ENCODE measurements at regions of chr14 and their contacts with region 1.

Region 1: DNA sequence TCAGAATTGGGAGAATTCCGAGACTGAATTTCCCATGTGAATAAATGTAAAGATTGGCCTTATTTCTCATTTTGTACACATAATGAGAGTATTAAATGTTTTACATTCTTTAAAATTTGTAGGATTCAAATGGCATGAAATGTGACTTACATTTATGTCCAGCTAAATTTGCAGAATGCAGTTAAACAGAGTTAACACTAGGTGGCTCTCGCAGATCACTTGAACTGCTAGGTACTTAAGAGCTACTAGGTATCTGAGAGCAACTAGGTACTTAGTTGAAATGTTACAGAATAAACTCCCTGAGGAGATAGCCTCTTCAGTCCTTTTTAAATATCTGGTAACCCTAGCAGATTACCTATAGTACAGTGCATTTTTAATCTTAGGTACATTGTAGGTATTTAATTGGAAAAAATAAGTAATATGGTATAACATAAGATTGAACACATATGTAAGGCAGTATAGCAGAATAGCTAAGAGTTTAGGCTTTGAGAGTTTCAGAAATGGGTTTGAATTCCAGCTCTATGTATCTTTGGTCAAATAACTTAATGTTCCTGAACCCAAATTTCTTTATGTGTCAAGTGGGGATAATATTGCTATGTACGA is 73.8 kb downstream of the KIAA0586 start:
- DNase-seq: peak; percentile 72
- H3K4me3 ChIP-seq: no peak overlapping the region
- H3K27ac ChIP-seq: no peak overlapping the region
- H3K27me3 ChIP-seq: no peaks in the 10 kb centered on the region
- CTCF ChIP-seq: peak; percentile 91

Region 2: DNA sequence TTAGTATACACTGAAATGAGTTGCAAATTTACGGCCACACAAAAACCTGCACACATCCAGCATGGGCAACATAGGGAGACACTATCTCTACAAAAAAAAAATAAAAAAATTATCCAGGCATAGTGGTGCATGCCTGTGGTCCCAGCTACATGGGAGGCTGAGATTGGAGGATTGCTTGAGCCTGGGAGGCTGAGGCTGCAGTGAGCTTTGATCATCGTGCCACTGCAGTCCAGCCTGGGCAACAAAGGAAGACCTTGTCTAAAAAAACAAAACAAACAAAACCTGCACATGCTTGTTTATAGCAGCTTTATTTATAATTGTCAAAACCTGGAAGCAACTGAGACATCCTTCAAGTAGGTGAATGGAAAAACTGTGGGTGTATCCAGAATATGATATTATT is 110.5 kb before region 1 on chr14:
- CTCF ChIA-PET with region 1: no interaction called
- POLR2A ChIA-PET with region 1: no interaction called
- DNase-seq: no peak
- H3K4me3 ChIP-seq: no peak overlapping the region
- H3K27ac ChIP-seq: no peak overlapping the region
- H3K27me3 ChIP-seq: peaks cover 3% of the 10 kb centered on the region
- CTCF ChIP-seq: no peak

Region 3: GRCh38 chr14:58455587-58456228 is 45.6 kb before region 1 on chr14:
- CTCF ChIA-PET with region 1: no interaction called
- POLR2A ChIA-PET with region 1: no interaction called
- DNase-seq: no peak
- H3K4me3 ChIP-seq: no peak overlapping the region
- H3K27ac ChIP-seq: no peak overlapping the region
- H3K27me3 ChIP-seq: no peaks in the 10 kb centered on the region
- CTCF ChIP-seq: no peak

Region 4: DNA sequence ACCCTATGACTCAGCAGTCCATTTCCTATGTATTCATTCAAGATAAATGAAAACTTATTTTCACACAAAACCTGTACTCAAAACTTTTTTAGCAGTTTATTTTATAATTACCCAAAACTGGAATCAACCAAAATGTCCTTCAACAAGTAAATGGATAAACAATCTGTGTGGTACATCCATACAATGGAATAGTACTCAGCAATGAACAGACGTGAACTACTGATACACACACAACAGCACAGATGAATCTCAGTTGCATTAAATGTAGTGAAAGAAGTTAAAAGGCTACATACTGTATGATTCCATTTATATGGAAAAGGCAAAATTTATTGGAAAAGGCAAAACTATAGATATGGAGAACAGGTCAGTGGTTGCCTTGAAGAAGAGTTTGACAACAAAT is 16.3 kb after region 1 on chr14:
- CTCF ChIA-PET with region 1: interaction called, 10 read pairs
- POLR2A ChIA-PET with region 1: no interaction called
- DNase-seq: no peak
- H3K4me3 ChIP-seq: no peak overlapping the region
- H3K27ac ChIP-seq: no peak overlapping the region
- H3K27me3 ChIP-seq: no peaks in the 10 kb centered on the region
- CTCF ChIP-seq: no peak

Region 5: GRCh38 chr14:58629281-58629680 is 128.0 kb after region 1 on chr14:
- CTCF ChIA-PET with region 1: interaction called, 81 read pairs
- POLR2A ChIA-PET with region 1: no interaction called
- DNase-seq: no peak
- H3K4me3 ChIP-seq: no peak overlapping the region
- H3K27ac ChIP-seq: no peak overlapping the region
- H3K27me3 ChIP-seq: no peaks in the 10 kb centered on the region
- CTCF ChIP-seq: no peak

Region 6: GRCh38 chr14:58637391-58638230 is 136.3 kb after region 1 on chr14 and contains the start of gene DACT1:
- CTCF ChIA-PET with region 1: interaction called, 81 read pairs
- POLR2A ChIA-PET with region 1: interaction called, 9 read pairs
- DNase-seq: peak; percentile 34
- H3K4me3 ChIP-seq: peak within 1 kb of the TSS; percentile 77
- H3K27ac ChIP-seq: peak within 1 kb of the TSS; percentile 92
- H3K27me3 ChIP-seq: no peaks in the 10 kb centered on the region
- CTCF ChIP-seq: no peak
- polyA plus RNA-seq, gene DACT1: 6.1 and 6.2 TPM in 2 replicates

Region 7: DNA sequence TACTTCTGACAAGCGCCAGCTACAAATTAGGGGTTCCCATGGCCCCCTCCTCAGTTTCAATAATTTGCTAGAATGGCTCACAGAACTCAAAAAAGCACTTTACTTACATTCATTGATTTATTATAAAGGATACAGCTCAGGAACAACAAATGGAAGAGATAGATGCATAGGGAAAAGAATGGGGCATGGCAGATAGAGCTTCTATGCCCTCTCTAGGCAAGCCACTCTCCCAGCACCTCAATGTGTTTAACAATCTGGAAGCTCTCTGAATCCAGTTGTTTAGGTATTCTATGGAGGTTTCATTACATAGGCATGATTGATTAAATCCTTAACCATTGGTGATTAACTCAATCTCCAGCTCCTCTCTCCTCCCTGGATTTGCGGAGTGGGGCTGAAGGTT is 502.7 kb after region 1 on chr14:
- CTCF ChIA-PET with region 1: interaction called, 10 read pairs
- POLR2A ChIA-PET with region 1: no interaction called
- DNase-seq: no peak
- H3K4me3 ChIP-seq: no peak overlapping the region
- H3K27ac ChIP-seq: no peak overlapping the region
- H3K27me3 ChIP-seq: no peaks in the 10 kb centered on the region
- CTCF ChIP-seq: peak; percentile 36

Region 8: DNA sequence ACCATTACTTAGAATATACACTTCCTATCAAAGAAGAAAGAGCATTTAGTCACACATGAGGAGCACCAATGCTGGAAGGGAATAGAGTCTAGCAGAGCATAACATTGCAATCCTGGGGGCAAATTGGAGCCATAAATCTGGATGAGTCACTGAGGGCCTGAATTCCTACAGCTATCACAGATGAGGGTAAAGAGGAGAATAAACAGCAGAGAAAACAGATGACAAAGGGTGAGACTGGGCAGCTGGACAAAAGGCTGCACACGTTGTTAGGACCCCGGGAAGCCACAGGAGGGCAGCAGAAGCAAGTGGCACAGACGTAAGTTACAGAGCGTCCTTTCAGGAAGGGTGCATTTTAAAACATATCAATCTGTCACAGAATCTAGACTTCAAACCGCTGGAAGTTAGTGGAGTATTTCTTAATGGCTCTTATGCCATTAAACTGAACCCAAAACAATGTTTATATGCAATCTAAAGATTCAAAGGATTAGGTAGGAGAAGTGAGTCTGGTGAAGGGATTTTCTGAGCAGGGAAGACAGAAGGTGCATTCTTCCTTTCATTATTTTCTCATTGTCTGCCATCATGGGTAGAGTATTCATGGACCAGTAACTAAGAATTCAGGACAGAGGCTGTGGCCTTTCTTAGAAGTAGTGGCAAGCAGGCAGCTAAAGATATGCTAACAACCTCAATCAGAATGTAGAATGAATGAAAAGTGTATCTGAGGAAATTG is 527.3 kb after region 1 on chr14:
- CTCF ChIA-PET with region 1: interaction called, 19 read pairs
- POLR2A ChIA-PET with region 1: no interaction called
- DNase-seq: peak; percentile 93
- H3K4me3 ChIP-seq: no peak overlapping the region
- H3K27ac ChIP-seq: peak overlapping the region; percentile 53
- H3K27me3 ChIP-seq: no peaks in the 10 kb centered on the region
- CTCF ChIP-seq: peak; percentile 95

Region 9: DNA sequence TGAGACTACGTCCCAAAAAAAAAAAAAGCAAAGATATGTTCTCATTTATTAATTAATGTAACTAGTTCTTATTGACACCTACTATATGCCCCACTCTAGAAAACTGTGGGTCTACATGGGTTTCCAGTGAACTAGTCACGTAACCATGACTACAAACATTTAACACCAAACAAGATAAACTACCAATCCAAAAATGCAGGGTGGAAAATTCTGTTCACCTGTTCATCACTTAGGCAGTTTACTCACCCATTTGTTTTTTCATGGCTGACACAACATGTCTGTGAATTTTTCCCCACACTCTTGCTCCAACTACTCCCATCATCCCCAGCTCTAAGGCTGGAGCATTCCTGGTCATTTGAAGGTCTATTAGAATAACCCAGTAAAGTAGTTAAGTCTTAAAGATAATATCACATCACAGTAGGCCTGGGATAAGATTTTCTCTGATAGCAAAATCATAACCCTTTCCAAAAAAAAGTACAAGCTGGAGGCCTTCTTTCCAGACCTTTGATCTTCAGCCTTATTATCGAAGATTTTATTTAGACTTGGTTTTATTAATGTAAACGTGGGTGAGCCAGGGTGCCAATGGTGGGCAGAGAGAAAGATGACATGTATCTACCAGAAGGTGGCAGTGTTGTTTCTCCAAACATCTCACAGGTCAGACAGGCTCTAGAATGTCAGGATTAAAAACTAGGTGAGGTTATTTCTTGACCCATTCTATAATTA is 625.6 kb after region 1 on chr14:
- CTCF ChIA-PET with region 1: interaction called, 40 read pairs
- POLR2A ChIA-PET with region 1: no interaction called
- DNase-seq: no peak
- H3K4me3 ChIP-seq: no peak overlapping the region
- H3K27ac ChIP-seq: no peak overlapping the region
- H3K27me3 ChIP-seq: no peaks in the 10 kb centered on the region
- CTCF ChIP-seq: peak; percentile 75

Measured in AG04450 (cell line).